Activated T-helper 2 cell treated with anti-CD3 and anti-CD28 coated beads, Interferon-gamma antibody, Interleukin-2, Interleukin-4, amounts not matched to agents 10 μg/mL and 5 μg/mL and 100 μg/mL, durations not matched to agents 14 hours and 24 hours and 36 hours (primary cell): ENCODE measurements at regions of chr9 and their contacts with region 1.

Region 1: GRCh38 chr9:3525836-3526164 is at the start of gene RFX3:
- DNase-seq: peak; percentile 85
- H3K4me3 Mint-ChIP-seq: peak within 1 kb of the TSS; percentile 93
- H3K27ac Mint-ChIP-seq: peak within 1 kb of the TSS; percentile 98
- H3K4me1 Mint-ChIP-seq: peaks cover 46% of the 10 kb centered on the region
- H3K27me3 Mint-ChIP-seq: no peaks in the 10 kb centered on the region
- total RNA-seq, gene RFX3: 11.3 and 11.9 TPM in 2 replicates

Region 2: GRCh38 chr9:3240656-3241268 is 285.0 kb before region 1 on chr9:
- intact Hi-C with region 1: loop called (anchors 5 kb)
- DNase-seq: peak; percentile 46
- H3K4me3 Mint-ChIP-seq: no peak overlapping the region
- H3K27ac Mint-ChIP-seq: no peak overlapping the region
- H3K4me1 Mint-ChIP-seq: peaks cover 5% of the 10 kb centered on the region
- H3K27me3 Mint-ChIP-seq: no peaks in the 10 kb centered on the region

Region 3: GRCh38 chr9:3467593-3468219 is 58.1 kb before region 1 on chr9:
- intact Hi-C with region 1: loop called (anchors 2 kb)
- DNase-seq: peak; percentile 41
- H3K4me3 Mint-ChIP-seq: no peak overlapping the region
- H3K27ac Mint-ChIP-seq: no peak overlapping the region
- H3K4me1 Mint-ChIP-seq: peaks cover 7% of the 10 kb centered on the region
- H3K27me3 Mint-ChIP-seq: no peaks in the 10 kb centered on the region

Region 4: DNA sequence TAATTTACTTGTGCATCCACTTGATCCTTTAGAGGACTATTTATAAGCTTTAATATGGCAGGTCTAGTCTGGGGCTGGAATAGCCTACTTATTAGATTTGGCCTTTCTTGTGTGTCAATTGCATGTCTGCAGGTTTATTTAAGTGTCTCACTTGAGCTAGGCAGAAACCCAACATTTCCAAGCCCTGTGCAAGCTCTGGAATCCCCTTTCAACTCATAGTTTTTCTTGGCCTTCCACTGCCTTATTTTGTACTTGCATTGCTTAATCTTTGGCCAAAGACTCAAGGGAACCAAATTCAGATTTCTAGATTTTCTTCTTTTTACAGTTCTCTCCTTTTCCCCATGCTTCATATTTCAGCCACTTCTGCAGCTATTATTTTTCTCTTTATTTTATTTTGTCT is 102.4 kb after region 1 on chr9:
- intact Hi-C with region 1: no loop called
- DNase-seq: no peak
- H3K4me3 Mint-ChIP-seq: no peak overlapping the region
- H3K27ac Mint-ChIP-seq: no peak overlapping the region
- H3K4me1 Mint-ChIP-seq: no peaks in the 10 kb centered on the region
- H3K27me3 Mint-ChIP-seq: no peaks in the 10 kb centered on the region

Region 5: GRCh38 chr9:3732077-3733038 is 206.6 kb after region 1 on chr9:
- intact Hi-C with region 1: loop called (anchors 1 kb)
- DNase-seq: peak; percentile 42
- H3K4me3 Mint-ChIP-seq: peak overlapping the region; percentile 20
- H3K27ac Mint-ChIP-seq: peak overlapping the region; percentile 49
- H3K4me1 Mint-ChIP-seq: peaks cover 51% of the 10 kb centered on the region
- H3K27me3 Mint-ChIP-seq: no peaks in the 10 kb centered on the region

Region 6: GRCh38 chr9:4228606-4229005 is 702.8 kb after region 1 on chr9:
- intact Hi-C with region 1: loop called (anchors 2 kb)
- DNase-seq: no peak
- H3K4me3 Mint-ChIP-seq: no peak overlapping the region
- H3K27ac Mint-ChIP-seq: no peak overlapping the region
- H3K4me1 Mint-ChIP-seq: peaks cover 19% of the 10 kb centered on the region
- H3K27me3 Mint-ChIP-seq: no peaks in the 10 kb centered on the region

Region 7: GRCh38 chr9:4679268-4680172 is 1153.7 kb after region 1 on chr9 and contains the start of gene CDC37L1:
- intact Hi-C with region 1: loop called (anchors 1 kb)
- DNase-seq: peak; percentile 99
- H3K4me3 Mint-ChIP-seq: no peak within 1 kb of the TSS
- H3K27ac Mint-ChIP-seq: no peak within 1 kb of the TSS
- H3K4me1 Mint-ChIP-seq: peaks cover 6% of the 10 kb centered on the region
- H3K27me3 Mint-ChIP-seq: peaks cover 2% of the 10 kb centered on the region
- total RNA-seq, gene CDC37L1: 10.0 and 10.2 TPM in 2 replicates